Natural killer cell (primary cell): ENCODE measurements at regions of chr3 and their contacts with region 1.

Region 1: DNA sequence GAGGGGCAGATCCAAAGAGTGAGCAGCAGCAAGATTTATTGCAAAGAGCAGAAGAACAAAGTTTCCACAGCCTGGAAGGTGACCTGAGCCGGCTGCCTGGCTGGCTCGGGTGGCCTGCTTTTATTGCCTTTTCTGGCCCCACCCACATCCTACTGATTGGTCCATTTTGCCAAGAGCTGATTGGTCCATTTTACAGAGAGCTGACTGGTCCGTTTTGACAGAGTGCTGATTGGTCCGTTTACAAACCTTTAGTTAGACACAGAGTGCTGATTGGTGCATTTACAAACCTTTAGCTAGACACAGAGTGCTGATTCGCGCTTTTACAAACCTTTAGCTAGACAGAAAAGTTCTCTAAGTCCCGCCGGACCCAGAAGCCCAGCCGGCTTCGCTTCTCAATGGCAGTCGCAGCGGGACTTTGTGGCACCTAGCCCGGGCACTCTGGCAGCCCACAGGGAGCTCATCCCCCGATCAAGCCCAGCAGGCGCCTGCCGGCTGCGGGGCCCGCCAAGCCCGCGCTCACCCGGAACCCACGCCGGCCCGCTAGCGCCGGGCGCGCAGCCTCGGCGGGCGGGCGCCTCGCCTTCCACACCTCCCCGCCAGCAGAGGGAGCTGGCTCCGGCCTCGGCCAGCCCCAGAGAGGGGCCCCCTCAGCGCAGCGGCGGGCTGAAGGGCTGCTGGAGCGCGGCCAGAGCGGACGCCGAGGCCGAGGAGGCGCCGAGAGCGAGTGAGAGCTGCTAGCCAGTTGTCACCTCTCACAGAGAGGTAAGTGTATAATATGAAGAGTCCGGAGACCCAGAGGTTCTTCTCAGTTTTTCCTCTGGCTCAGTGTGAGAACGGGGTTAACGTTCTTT is 339.2 kb downstream of the CHL1 start:
- DNase-seq: no peak
- ATAC-seq: no peak
- H3K4me3 ChIP-seq: no peak overlapping the region
- H3K4me3 Mint-ChIP-seq: no peak overlapping the region
- H3K27ac ChIP-seq: no peak overlapping the region
- H3K27ac Mint-ChIP-seq: no peak overlapping the region
- H3K4me1 ChIP-seq: no peaks in the 10 kb centered on the region
- H3K4me1 Mint-ChIP-seq: no peaks in the 10 kb centered on the region
- H3K27me3 ChIP-seq: no peaks in the 10 kb centered on the region
- H3K27me3 Mint-ChIP-seq: no peaks in the 10 kb centered on the region
- CTCF ChIP-seq: no peak

Region 2: DNA sequence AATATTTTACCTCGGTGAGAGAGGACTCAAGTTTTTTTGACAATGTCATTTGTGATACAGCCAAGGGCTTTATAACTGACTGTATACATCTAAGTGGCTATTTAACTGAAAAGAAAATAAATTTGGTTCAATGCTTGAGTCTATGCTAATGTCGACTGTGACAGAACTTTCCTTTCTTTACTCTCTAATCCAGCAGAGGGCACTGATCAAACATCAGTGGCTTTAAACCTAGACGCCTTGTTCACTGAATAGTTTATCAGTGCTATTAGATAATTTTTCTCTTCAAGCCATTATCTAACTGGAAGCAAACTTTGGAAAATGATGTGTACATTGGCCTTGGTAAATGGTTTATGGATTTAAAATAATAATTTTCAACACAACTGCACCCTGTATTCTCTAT is 54.1 kb before region 1 on chr3:
- intact Hi-C with region 1: no loop called
- DNase-seq: no peak
- ATAC-seq: no peak
- H3K4me3 ChIP-seq: no peak overlapping the region
- H3K4me3 Mint-ChIP-seq: no peak overlapping the region
- H3K27ac ChIP-seq: no peak overlapping the region
- H3K27ac Mint-ChIP-seq: no peak overlapping the region
- H3K4me1 ChIP-seq: no peaks in the 10 kb centered on the region
- H3K4me1 Mint-ChIP-seq: no peaks in the 10 kb centered on the region
- H3K27me3 ChIP-seq: no peaks in the 10 kb centered on the region
- H3K27me3 Mint-ChIP-seq: no peaks in the 10 kb centered on the region
- CTCF ChIP-seq: no peak

Region 3: DNA sequence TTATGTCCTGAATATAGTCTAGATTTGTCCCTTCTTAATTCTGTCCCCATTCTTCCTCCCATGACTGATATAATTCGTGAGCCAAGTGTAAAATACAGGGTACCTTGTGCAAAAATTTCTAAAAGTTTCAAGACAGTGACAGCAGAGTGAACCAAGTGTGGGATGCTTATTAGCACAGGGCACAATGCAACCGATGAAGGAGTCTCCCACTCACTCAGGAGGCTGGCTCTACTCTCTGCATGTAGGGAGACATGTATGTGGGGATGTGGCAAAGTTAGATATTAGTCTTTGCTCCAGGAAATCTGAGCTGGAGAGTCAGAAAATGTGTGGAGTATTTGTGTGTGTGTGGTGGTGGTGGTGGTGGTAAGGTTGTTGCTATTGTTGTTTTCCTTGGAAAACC is 33.3 kb before region 1 on chr3:
- intact Hi-C with region 1: no loop called
- DNase-seq: no peak
- ATAC-seq: peak in 1 of 3 donors; percentile 39
- H3K4me3 ChIP-seq: no peak overlapping the region
- H3K4me3 Mint-ChIP-seq: no peak overlapping the region
- H3K27ac ChIP-seq: no peak overlapping the region
- H3K27ac Mint-ChIP-seq: no peak overlapping the region
- H3K4me1 ChIP-seq: no peaks in the 10 kb centered on the region
- H3K4me1 Mint-ChIP-seq: no peaks in the 10 kb centered on the region
- H3K27me3 ChIP-seq: no peaks in the 10 kb centered on the region
- H3K27me3 Mint-ChIP-seq: no peaks in the 10 kb centered on the region
- CTCF ChIP-seq: no peak

Region 4: DNA sequence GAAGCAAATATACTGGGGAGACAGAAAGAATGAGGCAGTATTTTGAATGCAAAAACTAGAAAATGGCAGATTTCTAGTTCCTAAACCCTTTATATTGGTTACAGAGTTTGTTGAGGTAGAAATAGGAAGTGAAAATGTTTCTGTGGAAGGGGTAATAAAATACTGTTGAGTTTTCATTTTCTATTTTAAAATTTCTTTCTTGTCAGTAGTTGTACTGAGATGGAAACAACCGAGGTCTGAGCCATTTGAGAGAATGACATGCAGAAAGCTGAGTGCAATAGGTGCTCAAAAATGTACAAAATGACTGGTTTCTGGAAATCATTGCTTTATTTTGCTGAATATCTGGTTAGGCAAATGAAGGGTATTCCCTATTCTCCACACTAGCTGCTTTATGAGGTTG is 22.2 kb after region 1 on chr3:
- intact Hi-C with region 1: loop called (anchors 2 kb)
- DNase-seq: no peak
- ATAC-seq: no peak
- H3K4me3 ChIP-seq: no peak overlapping the region
- H3K4me3 Mint-ChIP-seq: no peak overlapping the region
- H3K27ac ChIP-seq: no peak overlapping the region
- H3K27ac Mint-ChIP-seq: no peak overlapping the region
- H3K4me1 ChIP-seq: no peaks in the 10 kb centered on the region
- H3K4me1 Mint-ChIP-seq: no peaks in the 10 kb centered on the region
- H3K27me3 ChIP-seq: no peaks in the 10 kb centered on the region
- H3K27me3 Mint-ChIP-seq: no peaks in the 10 kb centered on the region
- CTCF ChIP-seq: no peak

Region 5: GRCh38 chr3:1855841-1856240 is 1320.0 kb after region 1 on chr3:
- intact Hi-C with region 1: no loop called
- DNase-seq: no peak
- ATAC-seq: no peak
- H3K4me3 ChIP-seq: no peak overlapping the region
- H3K4me3 Mint-ChIP-seq: no peak overlapping the region
- H3K27ac ChIP-seq: no peak overlapping the region
- H3K27ac Mint-ChIP-seq: no peak overlapping the region
- H3K4me1 ChIP-seq: no peaks in the 10 kb centered on the region
- H3K4me1 Mint-ChIP-seq: no peaks in the 10 kb centered on the region
- H3K27me3 ChIP-seq: no peaks in the 10 kb centered on the region
- H3K27me3 Mint-ChIP-seq: no peaks in the 10 kb centered on the region
- CTCF ChIP-seq: no peak